ENCODE measurements at regions of chr6 and their contacts with region 1.

Region 1: DNA sequence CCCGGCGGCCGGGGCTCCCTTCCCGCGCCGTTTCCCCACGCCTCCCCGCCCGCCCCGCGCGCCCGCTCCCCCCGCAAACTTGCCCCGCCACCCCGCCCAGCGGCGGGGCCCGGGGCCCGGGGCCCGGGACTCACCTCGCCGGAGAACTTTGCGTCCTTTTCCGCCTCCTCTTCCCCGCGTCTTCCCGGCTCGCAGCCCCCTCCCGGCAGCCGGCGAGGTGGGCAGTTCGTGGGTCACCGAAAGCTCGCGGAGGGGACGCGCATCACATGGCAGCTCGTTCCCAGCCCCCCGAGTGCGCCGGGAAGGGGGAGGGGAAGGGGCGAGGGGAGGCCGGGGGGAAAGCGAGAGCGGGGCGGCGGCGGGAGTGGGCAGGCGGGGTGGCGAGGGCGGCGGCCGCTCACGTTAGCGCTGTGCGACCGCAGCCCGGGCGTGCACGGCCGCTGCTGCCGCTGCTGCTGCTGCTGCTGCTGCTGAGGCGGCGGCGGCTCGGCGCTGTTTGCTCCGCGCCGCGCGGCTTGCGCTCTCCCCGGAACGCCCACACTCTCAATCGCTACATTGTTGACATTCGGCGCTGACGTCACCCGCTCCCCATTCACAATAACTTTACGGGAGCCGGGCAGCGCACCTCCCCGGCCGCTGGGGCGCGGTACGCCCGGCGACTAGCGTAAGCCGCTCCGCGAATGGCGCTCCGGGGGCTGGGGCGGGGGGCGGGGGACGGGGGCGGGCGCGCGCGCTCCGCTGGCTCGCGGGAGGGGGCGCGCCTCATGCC is at the start of gene BACH2:
- DNase-seq: peak; percentile 88 to 98 (median 95)
- ATAC-seq: peak; percentile 74
- H3K4me3 ChIP-seq: peak within 1 kb of the TSS; percentile 82
- H3K4me3 Mint-ChIP-seq: peak within 1 kb of the TSS; percentile 97
- H3K27ac ChIP-seq: peak within 1 kb of the TSS; percentile 52 to 89
- H3K27ac Mint-ChIP-seq: peak within 1 kb of the TSS; percentile 91
- H3K4me1 ChIP-seq: peaks cover 34% of the 10 kb centered on the region
- H3K4me1 Mint-ChIP-seq: peaks cover 45% of the 10 kb centered on the region
- H3K27me3 ChIP-seq: no peaks in the 10 kb centered on the region
- H3K27me3 Mint-ChIP-seq: peaks cover 4% of the 10 kb centered on the region
- CTCF ChIP-seq: no peak
- total RNA-seq, gene BACH2: 157 to 170 TPM

Region 2: DNA sequence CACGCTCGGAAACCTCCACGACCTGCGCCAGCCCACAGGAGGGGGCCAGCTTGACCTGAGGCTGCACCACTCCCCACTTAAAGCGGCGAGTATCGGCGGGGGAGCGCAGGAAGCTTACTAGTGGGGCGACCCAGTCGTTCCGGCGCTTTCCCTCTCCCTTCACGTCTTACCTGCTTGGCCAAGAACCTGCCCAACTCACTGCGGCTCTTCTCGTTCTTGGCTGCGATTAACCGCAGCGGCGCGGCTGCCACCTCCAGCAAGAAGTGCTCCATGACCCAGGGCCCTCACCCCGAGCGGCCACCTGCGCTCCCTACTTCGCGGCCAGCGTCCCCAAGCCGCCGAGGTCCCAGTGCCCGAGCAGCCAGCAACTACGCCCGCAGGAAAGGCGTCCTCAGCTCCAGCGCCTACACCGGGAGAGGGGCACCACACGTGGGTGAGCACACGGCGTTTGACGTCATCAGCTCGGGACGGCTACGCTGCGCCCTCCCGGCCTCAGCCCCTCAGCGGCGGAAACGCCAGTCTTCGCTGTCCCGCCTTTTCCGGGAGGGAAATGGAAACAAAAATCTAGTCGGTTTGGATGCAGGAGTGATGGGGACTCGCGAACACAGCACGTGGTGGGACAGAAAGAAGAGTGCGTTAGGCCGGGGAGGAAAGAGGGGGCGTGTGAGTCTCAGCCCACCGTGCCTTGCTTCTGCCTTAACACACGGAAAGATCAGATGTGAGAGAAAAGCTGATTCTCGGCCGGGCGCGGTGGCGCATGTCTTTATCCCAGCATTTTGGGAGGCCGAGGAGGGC is 477.0 kb before region 1 on chr6 and contains the start of gene MDN1:
- CTCF ChIA-PET with region 1: no interaction called
- POLR2A ChIA-PET with region 1: no interaction called
- intact Hi-C with region 1: loop called in 1 of 2 experiments (anchors 10 kb)
- DNase-seq: peak; percentile 67 to 96 (median 82)
- ATAC-seq: peak; percentile 91
- H3K4me3 ChIP-seq: peak within 1 kb of the TSS; percentile 91
- H3K4me3 Mint-ChIP-seq: peak within 1 kb of the TSS; percentile 93
- H3K27ac ChIP-seq: peak within 1 kb of the TSS; percentile 79 to 83
- H3K27ac Mint-ChIP-seq: peak within 1 kb of the TSS; percentile 86
- H3K4me1 ChIP-seq: peaks cover 24% of the 10 kb centered on the region
- H3K4me1 Mint-ChIP-seq: peaks cover 36% of the 10 kb centered on the region
- H3K27me3 ChIP-seq: no peaks in the 10 kb centered on the region
- H3K27me3 Mint-ChIP-seq: no peaks in the 10 kb centered on the region
- CTCF ChIP-seq: no peak
- total RNA-seq, gene MDN1: 40.3 to 40.4 TPM

Region 3: DNA sequence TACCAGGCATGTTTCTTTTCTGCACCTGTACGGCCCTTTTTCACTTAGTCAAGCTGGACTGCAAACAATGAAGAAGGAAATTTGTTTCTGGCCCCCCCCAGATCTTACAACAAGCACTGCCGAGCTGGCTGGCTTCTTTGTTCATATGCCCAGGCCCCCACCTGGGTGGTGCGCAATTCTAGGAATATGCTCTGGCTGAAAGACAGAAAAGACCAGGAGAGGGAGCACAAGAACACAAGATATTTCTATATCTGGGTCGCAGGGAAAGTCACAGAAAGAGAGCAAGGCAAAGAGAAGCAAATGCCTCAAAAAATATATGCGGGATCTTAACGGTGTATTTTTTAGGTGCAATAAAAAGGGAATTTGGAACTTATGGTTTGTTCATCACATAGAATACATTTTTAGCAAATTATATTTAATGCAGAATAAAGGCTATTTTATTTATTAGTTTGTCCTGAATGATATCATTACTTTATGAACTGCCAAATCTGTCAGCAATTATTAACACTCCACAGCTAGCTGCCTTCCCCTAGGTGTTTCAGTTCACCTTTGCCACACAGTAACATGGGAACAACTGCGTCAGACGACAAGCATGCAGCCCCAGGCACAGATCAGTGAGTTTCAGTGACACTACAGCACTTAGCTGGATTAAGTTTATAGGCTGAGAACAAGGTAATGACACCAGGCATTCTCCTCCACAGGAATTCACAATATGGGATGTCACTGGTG is 325.8 kb before region 1 on chr6:
- CTCF ChIA-PET with region 1: no interaction called
- POLR2A ChIA-PET with region 1: no interaction called
- intact Hi-C with region 1: loop called in 1 of 2 experiments (anchors 5 kb)
- DNase-seq: peak in 5 of 14 experiments; percentile 13 to 65 (median 58)
- ATAC-seq: peak; percentile 77
- H3K4me3 ChIP-seq: no peak overlapping the region
- H3K4me3 Mint-ChIP-seq: no peak overlapping the region
- H3K27ac ChIP-seq: no peak overlapping the region
- H3K27ac Mint-ChIP-seq: no peak overlapping the region
- H3K4me1 ChIP-seq: peaks cover 5% of the 10 kb centered on the region
- H3K4me1 Mint-ChIP-seq: peaks cover 44% of the 10 kb centered on the region
- H3K27me3 ChIP-seq: no peaks in the 10 kb centered on the region
- H3K27me3 Mint-ChIP-seq: no peaks in the 10 kb centered on the region
- CTCF ChIP-seq: peak; percentile 49

Region 4: GRCh38 chr6:90113389-90113788 is 183.1 kb before region 1 on chr6:
- CTCF ChIA-PET with region 1: no interaction called
- POLR2A ChIA-PET with region 1: no interaction called
- intact Hi-C with region 1: no loop called
- DNase-seq: no peak
- ATAC-seq: no peak
- H3K4me3 ChIP-seq: no peak overlapping the region
- H3K4me3 Mint-ChIP-seq: peak overlapping the region; percentile 13
- H3K27ac ChIP-seq: no peak overlapping the region
- H3K27ac Mint-ChIP-seq: peak overlapping the region; percentile 79
- H3K4me1 ChIP-seq: peaks cover 22% of the 10 kb centered on the region
- H3K4me1 Mint-ChIP-seq: peaks cover 60% of the 10 kb centered on the region
- H3K27me3 ChIP-seq: no peaks in the 10 kb centered on the region
- H3K27me3 Mint-ChIP-seq: no peaks in the 10 kb centered on the region
- CTCF ChIP-seq: no peak

Region 5: DNA sequence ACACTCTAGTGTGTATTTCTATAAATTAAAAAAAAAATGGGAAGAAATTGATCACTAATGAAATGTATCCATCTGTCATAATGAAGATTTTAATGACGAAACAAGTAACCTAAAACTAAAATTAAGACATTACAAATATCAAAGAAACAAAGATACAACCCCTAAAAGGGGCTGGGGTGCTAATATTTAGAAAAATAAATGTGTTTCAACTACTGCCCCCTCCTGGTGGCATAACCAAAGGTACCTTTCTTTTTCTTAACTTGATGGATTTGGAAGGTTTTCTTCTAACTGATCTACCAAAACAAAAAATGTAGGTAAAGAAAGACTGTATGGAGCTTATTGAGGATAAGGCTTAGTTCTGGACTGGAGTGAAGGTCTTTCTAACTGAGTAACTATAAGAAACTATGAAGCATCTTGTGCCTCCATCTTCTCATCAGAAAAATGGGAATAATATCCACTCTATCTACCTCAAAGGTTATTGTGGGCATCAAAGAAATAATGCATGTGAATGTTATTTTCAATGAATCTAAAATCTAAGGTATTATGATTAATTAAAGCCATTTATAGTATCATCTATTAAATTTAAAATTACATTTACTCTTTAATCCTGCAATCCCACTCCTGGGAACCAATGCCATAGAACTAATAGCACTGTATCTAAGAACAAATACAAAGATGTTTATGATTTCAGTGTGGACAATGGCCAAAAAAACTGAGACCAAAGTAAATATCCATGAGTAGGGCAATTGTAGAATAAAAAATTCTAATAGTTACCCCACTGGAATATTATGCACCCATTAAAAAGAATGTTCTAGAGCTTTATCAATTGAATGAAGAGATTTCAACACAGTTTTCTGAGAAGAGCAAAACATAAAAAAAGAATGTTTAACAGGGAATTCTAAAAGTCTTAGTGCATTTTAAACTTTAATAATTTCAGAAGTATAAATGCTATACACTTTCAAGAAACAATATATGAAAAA is 117.0 kb before region 1 on chr6:
- CTCF ChIA-PET with region 1: no interaction called
- POLR2A ChIA-PET with region 1: interaction called, 5 read pairs
- intact Hi-C with region 1: loop called in 1 of 2 experiments (anchors 5 kb)
- DNase-seq: peak in 5 of 14 experiments; percentile 16 to 67 (median 57)
- ATAC-seq: no peak
- H3K4me3 ChIP-seq: no peak overlapping the region
- H3K4me3 Mint-ChIP-seq: no peak overlapping the region
- H3K27ac ChIP-seq: no peak overlapping the region
- H3K27ac Mint-ChIP-seq: peak overlapping the region; percentile 84
- H3K4me1 ChIP-seq: peaks cover 35% of the 10 kb centered on the region
- H3K4me1 Mint-ChIP-seq: peaks cover 87% of the 10 kb centered on the region
- H3K27me3 ChIP-seq: no peaks in the 10 kb centered on the region
- H3K27me3 Mint-ChIP-seq: no peaks in the 10 kb centered on the region
- CTCF ChIP-seq: peak; percentile 75

Region 6: GRCh38 chr6:90251295-90251992 is 45.1 kb before region 1 on chr6:
- CTCF ChIA-PET with region 1: no interaction called
- POLR2A ChIA-PET with region 1: no interaction called
- intact Hi-C with region 1: no loop called
- DNase-seq: no peak
- ATAC-seq: no peak
- H3K4me3 ChIP-seq: no peak overlapping the region
- H3K4me3 Mint-ChIP-seq: peak overlapping the region; percentile 3
- H3K27ac ChIP-seq: no peak overlapping the region
- H3K27ac Mint-ChIP-seq: peak overlapping the region; percentile 84
- H3K4me1 ChIP-seq: peaks cover 12% of the 10 kb centered on the region
- H3K4me1 Mint-ChIP-seq: peaks cover 85% of the 10 kb centered on the region
- H3K27me3 ChIP-seq: no peaks in the 10 kb centered on the region
- H3K27me3 Mint-ChIP-seq: no peaks in the 10 kb centered on the region
- CTCF ChIP-seq: no peak

Region 7: GRCh38 chr6:90274451-90275030 is 22.0 kb before region 1 on chr6:
- CTCF ChIA-PET with region 1: interaction called, 5 read pairs
- POLR2A ChIA-PET with region 1: interaction called, 80 read pairs
- intact Hi-C with region 1: loop called (anchors 1 kb)
- DNase-seq: peak; percentile 80 to 98 (median 86)
- ATAC-seq: peak; percentile 89
- H3K4me3 ChIP-seq: peak overlapping the region; percentile 5
- H3K4me3 Mint-ChIP-seq: peak overlapping the region; percentile 71
- H3K27ac ChIP-seq: peak overlapping the region; percentile 75 to 90
- H3K27ac Mint-ChIP-seq: peak overlapping the region; percentile 97
- H3K4me1 ChIP-seq: peaks cover 39% of the 10 kb centered on the region
- H3K4me1 Mint-ChIP-seq: peaks cover 89% of the 10 kb centered on the region
- H3K27me3 ChIP-seq: no peaks in the 10 kb centered on the region
- H3K27me3 Mint-ChIP-seq: no peaks in the 10 kb centered on the region
- CTCF ChIP-seq: peak; percentile 30

Region 8: GRCh38 chr6:90350689-90351554 is 54.4 kb after region 1 on chr6:
- CTCF ChIA-PET with region 1: no interaction called
- POLR2A ChIA-PET with region 1: no interaction called
- intact Hi-C with region 1: loop called in 1 of 2 experiments (anchors 5 kb)
- DNase-seq: peak; percentile 6 to 86 (median 36)
- ATAC-seq: peak; percentile 99
- H3K4me3 ChIP-seq: no peak overlapping the region
- H3K4me3 Mint-ChIP-seq: peak overlapping the region; percentile 5
- H3K27ac ChIP-seq: peak overlapping the region in 1 of 2 donors; percentile 8
- H3K27ac Mint-ChIP-seq: peak overlapping the region; percentile 43
- H3K4me1 ChIP-seq: peaks cover 9% of the 10 kb centered on the region
- H3K4me1 Mint-ChIP-seq: peaks cover 21% of the 10 kb centered on the region
- H3K27me3 ChIP-seq: no peaks in the 10 kb centered on the region
- H3K27me3 Mint-ChIP-seq: no peaks in the 10 kb centered on the region
- CTCF ChIP-seq: no peak

Region 9: GRCh38 chr6:90472744-90473143 is 176.2 kb after region 1 on chr6:
- CTCF ChIA-PET with region 1: interaction called, 3 read pairs
- POLR2A ChIA-PET with region 1: no interaction called
- intact Hi-C with region 1: loop called (anchors 2 to 5 kb)
- DNase-seq: peak in 4 of 14 experiments; percentile 40 to 56 (median 49)
- ATAC-seq: peak; percentile 35
- H3K4me3 ChIP-seq: peak overlapping the region; percentile 21
- H3K4me3 Mint-ChIP-seq: peak overlapping the region; percentile 14
- H3K27ac ChIP-seq: no peak overlapping the region
- H3K27ac Mint-ChIP-seq: no peak overlapping the region
- H3K4me1 ChIP-seq: peaks cover 38% of the 10 kb centered on the region
- H3K4me1 Mint-ChIP-seq: peaks cover 52% of the 10 kb centered on the region
- H3K27me3 ChIP-seq: no peaks in the 10 kb centered on the region
- H3K27me3 Mint-ChIP-seq: no peaks in the 10 kb centered on the region
- CTCF ChIP-seq: no peak

Measured in CD4-positive, alpha-beta T cell (primary cell).